ENCODE measurements at regions of chr17 and their contacts with region 1.

Region 1: GRCh38 chr17:48011405-48012150 is 26.0 kb downstream of the COPZ2 start:
- DNase-seq: peak; percentile 43
- H3K4me3 ChIP-seq: peak overlapping the region; percentile 31 to 64 (median 61)
- H3K27ac ChIP-seq: no peak overlapping the region
- H3K4me1 ChIP-seq: peaks cover 9% of the 10 kb centered on the region
- H3K27me3 ChIP-seq: peaks cover 0 to 2% of the 10 kb centered on the region in 2 experiments
- CTCF ChIP-seq: peak; percentile 36 to 49
- POLR2A ChIP-seq: no peak

Region 2: DNA sequence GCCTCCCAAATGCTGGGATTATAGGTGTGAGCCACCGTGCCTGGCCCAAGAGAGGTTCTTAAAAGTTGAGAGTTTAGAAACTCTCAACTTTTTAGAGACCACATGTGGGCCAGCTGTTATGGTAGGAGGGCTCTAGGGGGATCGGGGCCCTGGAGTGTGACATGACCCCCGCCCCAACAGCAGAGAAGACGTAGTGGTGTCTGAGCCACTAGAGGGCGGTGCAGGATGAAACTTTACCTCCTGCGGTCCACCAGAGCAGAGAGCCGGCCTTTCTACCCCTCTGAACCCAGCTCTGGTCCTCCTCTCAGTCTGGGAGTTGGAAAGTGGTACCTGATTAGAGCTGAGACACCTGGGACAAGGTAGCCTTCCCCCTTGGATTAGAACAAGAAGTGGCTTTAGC is 33.3 kb before region 1 on chr17:
- CTCF ChIA-PET with region 1: interaction called, 469 read pairs
- POLR2A ChIA-PET with region 1: no interaction called
- dilution Hi-C with region 1: no loop called
- intact Hi-C with region 1: no loop called
- DNase-seq: peak; percentile 48
- H3K4me3 ChIP-seq: no peak overlapping the region
- H3K27ac ChIP-seq: no peak overlapping the region
- H3K4me1 ChIP-seq: no peaks in the 10 kb centered on the region
- H3K27me3 ChIP-seq: no peaks in the 10 kb centered on the region
- CTCF ChIP-seq: peak; percentile 75 to 83
- POLR2A ChIP-seq: no peak

Region 3: GRCh38 chr17:47987240-47987835 is 24.2 kb before region 1 on chr17:
- CTCF ChIA-PET with region 1: interaction called, 469 read pairs
- POLR2A ChIA-PET with region 1: no interaction called
- dilution Hi-C with region 1: no loop called
- intact Hi-C with region 1: no loop called
- DNase-seq: peak; percentile 42
- H3K4me3 ChIP-seq: no peak overlapping the region
- H3K27ac ChIP-seq: no peak overlapping the region
- H3K4me1 ChIP-seq: peaks cover 6% of the 10 kb centered on the region
- H3K27me3 ChIP-seq: no peaks in the 10 kb centered on the region
- CTCF ChIP-seq: no peak
- POLR2A ChIP-seq: no peak